Mucosa of descending colon (tissue), 3 donors: ENCODE measurements at regions of chr11 and their contacts with region 1.

Region 1: DNA sequence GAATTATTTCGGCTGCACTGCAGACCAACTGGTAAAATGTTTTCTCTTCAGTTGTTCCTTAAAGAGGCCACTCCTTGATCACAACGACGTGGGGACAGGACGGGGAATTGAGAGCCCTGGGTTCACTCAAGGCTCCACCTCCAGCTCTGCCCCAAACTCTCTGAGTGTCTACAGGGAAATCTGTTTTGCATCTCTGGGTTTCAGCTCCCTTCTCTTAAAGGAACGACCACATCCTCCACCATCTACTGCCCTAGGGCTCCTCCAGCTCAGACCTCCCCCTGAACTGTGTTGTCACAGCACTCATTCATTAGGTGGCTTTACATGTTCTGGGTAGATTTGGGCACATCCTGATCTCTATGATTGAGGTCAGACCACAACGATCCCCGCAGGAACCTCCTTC is 5.1 kb upstream of the PPFIA1 start:
- DNase-seq: no peak
- ATAC-seq: no peak
- H3K4me3 ChIP-seq: no peak overlapping the region
- H3K4me1 ChIP-seq: peaks cover 5% of the 10 kb centered on the region
- CTCF ChIP-seq: no peak

Region 2: GRCh38 chr11:70202898-70203748 is 62.2 kb before region 1 on chr11 and contains the start of gene FADD:
- intact Hi-C with region 1: loop called in 1 of 2 experiments (anchors 10 kb)
- DNase-seq: peak; percentile 93 to 95 (median 95)
- ATAC-seq: peak; percentile 88
- H3K4me3 ChIP-seq: peak within 1 kb of the TSS; percentile 69
- H3K4me1 ChIP-seq: peaks cover 16% of the 10 kb centered on the region
- CTCF ChIP-seq: no peak
- total RNA-seq, gene FADD: 26.3 to 31.0 (median 26.9) TPM

Region 3: GRCh38 chr11:70333261-70333660 is 67.9 kb after region 1 on chr11:
- intact Hi-C with region 1: no loop called
- DNase-seq: no peak
- ATAC-seq: no peak
- H3K4me3 ChIP-seq: no peak overlapping the region
- H3K4me1 ChIP-seq: no peaks in the 10 kb centered on the region
- CTCF ChIP-seq: no peak